ENCODE measurements at regions of chr7 and their contacts with region 1.

Region 1: GRCh38 chr7:6435486-6436384 is 12.0 kb downstream of the DAGLB start:
- DNase-seq: peak; percentile 89
- ATAC-seq: peak; percentile 89
- H3K4me3 Mint-ChIP-seq: peak overlapping the region; percentile 61
- H3K27ac Mint-ChIP-seq: peak overlapping the region; percentile 87
- H3K4me1 Mint-ChIP-seq: peaks cover 42% of the 10 kb centered on the region
- H3K27me3 Mint-ChIP-seq: no peaks in the 10 kb centered on the region
- CTCF ChIP-seq: peak; percentile 93

Region 2: DNA sequence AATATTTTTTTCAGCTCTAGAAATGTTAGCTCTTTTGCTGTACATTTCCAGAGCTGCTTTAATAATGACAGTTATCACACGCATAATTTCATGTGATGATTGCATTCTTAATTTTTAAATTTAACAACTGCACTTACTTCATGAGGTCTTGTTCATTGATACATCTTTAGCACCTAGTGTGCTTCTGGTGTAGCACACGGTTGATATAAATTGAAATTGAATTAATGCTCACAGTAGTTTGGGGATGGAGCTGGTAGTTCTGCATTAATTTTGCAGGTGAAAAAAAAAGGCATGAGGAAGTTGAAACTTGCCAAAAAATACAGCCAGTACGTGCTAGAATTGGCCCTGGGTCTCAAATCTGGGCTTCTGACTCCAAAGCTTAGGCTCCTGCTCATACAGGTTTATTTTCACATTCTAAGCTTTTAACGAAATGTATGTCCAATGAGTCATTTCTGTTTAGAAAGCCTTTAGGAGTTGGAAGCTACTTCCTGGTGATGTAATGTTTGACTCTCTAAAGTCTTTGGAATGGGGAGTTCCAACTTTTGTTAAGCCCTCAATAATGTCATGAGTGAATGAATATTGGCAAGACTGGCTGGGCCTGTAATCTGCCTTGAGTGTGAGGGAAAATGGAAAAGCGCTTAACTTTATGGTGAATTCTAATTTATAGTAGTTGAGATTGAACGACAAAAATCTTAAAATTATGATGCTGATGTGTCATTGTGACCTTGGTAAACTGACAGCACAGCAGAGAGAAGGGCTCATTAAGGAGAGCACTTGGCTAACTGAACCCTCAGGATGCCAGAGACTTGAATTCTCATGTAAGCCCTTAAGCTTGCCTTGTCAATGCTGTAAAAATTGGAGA is 50.4 kb before region 1 on chr7:
- CTCF ChIA-PET with region 1: no interaction called
- POLR2A ChIA-PET with region 1: no interaction called
- intact Hi-C with region 1: loop called (anchors 5 kb)
- DNase-seq: no peak
- ATAC-seq: no peak
- H3K4me3 Mint-ChIP-seq: no peak overlapping the region
- H3K27ac Mint-ChIP-seq: peak overlapping the region; percentile 68
- H3K4me1 Mint-ChIP-seq: peaks cover 55% of the 10 kb centered on the region
- H3K27me3 Mint-ChIP-seq: no peaks in the 10 kb centered on the region
- CTCF ChIP-seq: no peak

Region 3: DNA sequence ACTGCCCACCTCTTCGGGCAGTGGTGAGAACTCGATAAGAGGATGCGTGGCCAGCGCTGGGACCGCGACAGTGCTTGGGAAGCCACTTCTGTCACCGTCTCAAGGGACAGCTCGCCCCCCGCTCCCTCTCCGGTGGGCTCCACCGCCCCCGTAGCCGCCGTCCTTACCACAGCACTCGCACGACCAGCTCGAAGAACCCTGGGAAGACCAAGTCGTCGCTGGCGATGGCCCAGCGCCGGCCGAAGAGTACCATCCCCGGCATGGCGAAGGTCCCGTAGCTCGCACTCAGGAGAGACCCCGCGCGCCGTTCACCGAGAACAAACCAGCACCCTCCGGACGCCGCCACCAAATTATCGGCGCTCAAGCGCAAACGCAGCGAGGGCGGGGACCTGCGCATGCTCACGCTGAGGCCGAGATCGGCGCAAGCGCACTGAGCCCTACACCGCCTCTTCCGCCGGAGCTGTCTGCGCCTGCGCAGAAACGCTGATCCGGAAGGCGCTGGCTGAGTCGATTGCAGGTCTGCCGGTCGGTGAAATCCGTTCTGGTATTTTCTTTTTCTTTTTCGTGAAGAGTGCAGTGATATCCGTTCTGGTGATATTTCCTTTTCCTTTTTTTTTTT is 12.0 kb after region 1 on chr7 and contains the start of gene DAGLB:
- CTCF ChIA-PET with region 1: interaction called, 18 read pairs
- POLR2A ChIA-PET with region 1: interaction called, 27 read pairs
- intact Hi-C with region 1: no loop called
- DNase-seq: peak; percentile 96
- ATAC-seq: peak; percentile 93
- H3K4me3 Mint-ChIP-seq: peak within 1 kb of the TSS; percentile 96
- H3K27ac Mint-ChIP-seq: peak within 1 kb of the TSS; percentile 93
- H3K4me1 Mint-ChIP-seq: peaks cover 28% of the 10 kb centered on the region
- H3K27me3 Mint-ChIP-seq: no peaks in the 10 kb centered on the region
- CTCF ChIP-seq: no peak
- total RNA-seq, gene DAGLB: 17.7 to 20.2 TPM

Region 4: GRCh38 chr7:6489612-6490011 is 53.9 kb after region 1 on chr7:
- CTCF ChIA-PET with region 1: no interaction called
- POLR2A ChIA-PET with region 1: no interaction called
- intact Hi-C with region 1: no loop called
- DNase-seq: no peak
- ATAC-seq: peak; percentile 47
- H3K4me3 Mint-ChIP-seq: no peak overlapping the region
- H3K27ac Mint-ChIP-seq: no peak overlapping the region
- H3K4me1 Mint-ChIP-seq: peaks cover 2% of the 10 kb centered on the region
- H3K27me3 Mint-ChIP-seq: no peaks in the 10 kb centered on the region
- CTCF ChIP-seq: no peak